Left cardiac atrium (tissue), 4 donors: ENCODE measurements at regions of chr12 and their contacts with region 1.

Region 1: GRCh38 chr12:12376646-12377448 is 20.0 kb downstream of the BORCS5 start:
- DNase-seq: no peak
- ATAC-seq: peak; percentile 81 to 84

Region 2: GRCh38 chr12:12254553-12254952 is 122.3 kb before region 1 on chr12:
- intact Hi-C with region 1: no loop called
- DNase-seq: no peak
- ATAC-seq: no peak

Region 3: DNA sequence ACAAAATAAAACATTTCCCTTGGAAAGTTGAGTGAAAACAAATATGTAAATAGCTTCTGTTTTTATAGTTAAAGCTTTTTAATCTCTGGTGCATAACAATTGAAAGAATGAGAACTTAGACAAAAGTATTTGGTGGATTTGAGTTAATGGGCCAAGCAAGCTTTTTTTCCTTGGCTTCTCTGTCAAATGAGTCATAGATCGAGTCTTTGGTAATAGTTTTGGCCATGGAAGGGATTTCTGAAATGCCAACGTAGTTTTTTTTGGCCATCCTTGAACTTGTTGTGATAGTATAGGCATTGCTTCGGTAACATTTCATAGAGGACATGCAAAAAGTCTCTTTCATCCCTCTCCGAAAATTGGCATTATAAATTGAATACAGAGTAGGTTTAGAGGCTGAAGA is 284.2 kb after region 1 on chr12:
- intact Hi-C with region 1: loop called in 1 of 2 experiments (anchors 2 kb)
- DNase-seq: no peak
- ATAC-seq: peak; percentile 38 to 51

Region 4: DNA sequence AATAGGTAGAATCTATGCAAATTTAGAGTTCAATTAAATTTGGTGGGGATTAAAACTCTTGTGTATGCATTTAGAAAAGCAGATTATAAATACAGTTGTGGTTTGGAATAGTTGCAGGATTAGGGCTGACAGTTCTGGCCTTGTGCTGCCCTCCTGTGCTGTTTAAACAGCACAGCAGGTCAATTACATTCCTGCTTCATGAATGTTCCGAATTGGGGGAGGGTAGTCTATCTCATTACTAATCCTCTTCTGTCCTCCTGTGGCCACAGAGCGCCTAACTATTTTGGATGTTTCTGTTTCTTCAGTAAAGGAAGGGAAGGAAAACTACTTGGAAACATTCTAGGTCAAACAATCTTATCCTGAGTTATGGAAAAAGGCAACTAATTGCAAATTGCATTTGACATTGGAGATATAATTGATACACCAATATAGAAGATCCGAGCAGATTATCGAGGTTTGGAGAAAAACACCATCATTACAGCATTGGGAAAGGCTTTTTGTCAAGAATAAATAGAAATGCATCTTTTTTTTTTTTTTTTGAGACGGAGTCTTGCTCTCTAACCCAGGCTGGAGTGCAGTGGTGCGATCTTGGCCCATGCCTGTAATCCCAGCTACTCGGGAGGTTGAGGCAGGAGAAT is 327.9 kb after region 1 on chr12:
- intact Hi-C with region 1: loop called in 1 of 2 experiments (anchors 10 kb)
- DNase-seq: peak; percentile 56
- ATAC-seq: peak; percentile 100